ENCODE measurements at regions of chr1 and their contacts with region 1.

Region 1: DNA sequence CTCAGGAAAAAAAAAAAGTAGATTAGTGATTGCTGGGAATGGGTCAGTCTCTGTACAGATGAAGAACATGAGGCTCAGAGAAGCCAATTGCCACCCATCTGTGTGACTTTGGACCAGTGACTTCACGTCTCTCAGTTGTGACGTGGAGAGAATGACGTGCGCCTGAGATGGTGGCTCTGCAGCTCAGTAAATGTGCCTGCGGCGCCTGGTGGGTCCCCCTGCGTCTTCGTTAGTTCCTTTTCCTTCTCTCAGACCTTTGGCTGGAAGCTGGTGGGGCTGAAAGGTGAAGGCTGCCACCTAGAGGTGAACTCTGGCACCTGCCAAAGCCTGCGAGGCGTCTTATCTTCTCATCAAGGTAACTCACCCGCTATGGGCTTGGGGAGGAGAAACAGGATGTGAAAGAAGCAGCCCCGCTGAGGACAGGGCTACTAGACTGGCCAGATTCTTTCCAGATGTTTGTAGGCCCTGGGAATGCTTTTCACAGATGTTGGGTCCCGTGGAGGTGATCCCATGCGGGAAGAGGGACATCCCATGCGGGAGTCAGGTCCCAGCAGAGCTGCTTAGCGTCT is 8.7 kb upstream of the E2F2 start:
- DNase-seq: peak; percentile 81 to 96
- ATAC-seq: peak; percentile 93 to 96 (median 94)
- H3K4me3 ChIP-seq: no peak overlapping the region
- H3K4me3 Mint-ChIP-seq: peak overlapping the region; percentile 17
- H3K27ac ChIP-seq: no peak overlapping the region
- H3K27ac Mint-ChIP-seq: peak overlapping the region in 1 of 2 donors; percentile 33
- H3K4me1 ChIP-seq: peaks cover 16% of the 10 kb centered on the region
- H3K4me1 Mint-ChIP-seq: peaks cover 6 to 11% of the 10 kb centered on the region in 2 donors
- H3K27me3 ChIP-seq: no peaks in the 10 kb centered on the region
- H3K27me3 Mint-ChIP-seq: peaks cover 0 to 3% of the 10 kb centered on the region in 2 donors
- CTCF ChIP-seq: peak; percentile 92

Region 2: GRCh38 chr1:22431965-22432364 is 1107.8 kb before region 1 on chr1:
- intact Hi-C with region 1: no loop called
- DNase-seq: no peak
- ATAC-seq: no peak
- H3K4me3 ChIP-seq: no peak overlapping the region
- H3K4me3 Mint-ChIP-seq: no peak overlapping the region
- H3K27ac ChIP-seq: no peak overlapping the region
- H3K27ac Mint-ChIP-seq: no peak overlapping the region
- H3K4me1 ChIP-seq: peaks cover 3% of the 10 kb centered on the region
- H3K4me1 Mint-ChIP-seq: peaks cover 4% of the 10 kb centered on the region in 2 donors
- H3K27me3 ChIP-seq: no peaks in the 10 kb centered on the region
- H3K27me3 Mint-ChIP-seq: peaks cover 7 to 33% of the 10 kb centered on the region in 2 donors
- CTCF ChIP-seq: no peak

Region 3: GRCh38 chr1:22889213-22889827 is 650.5 kb before region 1 on chr1:
- intact Hi-C with region 1: no loop called
- DNase-seq: peak in 1 of 2 donors; percentile 31
- ATAC-seq: peak in 2 of 3 donors; percentile 41 to 66
- H3K4me3 ChIP-seq: no peak overlapping the region
- H3K4me3 Mint-ChIP-seq: no peak overlapping the region
- H3K27ac ChIP-seq: no peak overlapping the region
- H3K27ac Mint-ChIP-seq: peak overlapping the region in 1 of 2 donors; percentile 1
- H3K4me1 ChIP-seq: peaks cover 15% of the 10 kb centered on the region
- H3K4me1 Mint-ChIP-seq: peaks cover 23 to 32% of the 10 kb centered on the region in 2 donors
- H3K27me3 ChIP-seq: no peaks in the 10 kb centered on the region
- H3K27me3 Mint-ChIP-seq: peaks cover 0 to 6% of the 10 kb centered on the region in 2 donors
- CTCF ChIP-seq: peak; percentile 86

Region 4: GRCh38 chr1:23496490-23497181 is 43.1 kb before region 1 on chr1:
- intact Hi-C with region 1: loop called (anchors 1 kb)
- DNase-seq: no peak
- ATAC-seq: peak in 1 of 3 donors; percentile 15
- H3K4me3 ChIP-seq: no peak overlapping the region
- H3K4me3 Mint-ChIP-seq: no peak overlapping the region
- H3K27ac ChIP-seq: no peak overlapping the region
- H3K27ac Mint-ChIP-seq: no peak overlapping the region
- H3K4me1 ChIP-seq: peaks cover 7% of the 10 kb centered on the region
- H3K4me1 Mint-ChIP-seq: no peaks in the 10 kb centered on the region
- H3K27me3 ChIP-seq: no peaks in the 10 kb centered on the region
- H3K27me3 Mint-ChIP-seq: peaks cover 4 to 10% of the 10 kb centered on the region in 2 donors
- CTCF ChIP-seq: no peak

Region 5: DNA sequence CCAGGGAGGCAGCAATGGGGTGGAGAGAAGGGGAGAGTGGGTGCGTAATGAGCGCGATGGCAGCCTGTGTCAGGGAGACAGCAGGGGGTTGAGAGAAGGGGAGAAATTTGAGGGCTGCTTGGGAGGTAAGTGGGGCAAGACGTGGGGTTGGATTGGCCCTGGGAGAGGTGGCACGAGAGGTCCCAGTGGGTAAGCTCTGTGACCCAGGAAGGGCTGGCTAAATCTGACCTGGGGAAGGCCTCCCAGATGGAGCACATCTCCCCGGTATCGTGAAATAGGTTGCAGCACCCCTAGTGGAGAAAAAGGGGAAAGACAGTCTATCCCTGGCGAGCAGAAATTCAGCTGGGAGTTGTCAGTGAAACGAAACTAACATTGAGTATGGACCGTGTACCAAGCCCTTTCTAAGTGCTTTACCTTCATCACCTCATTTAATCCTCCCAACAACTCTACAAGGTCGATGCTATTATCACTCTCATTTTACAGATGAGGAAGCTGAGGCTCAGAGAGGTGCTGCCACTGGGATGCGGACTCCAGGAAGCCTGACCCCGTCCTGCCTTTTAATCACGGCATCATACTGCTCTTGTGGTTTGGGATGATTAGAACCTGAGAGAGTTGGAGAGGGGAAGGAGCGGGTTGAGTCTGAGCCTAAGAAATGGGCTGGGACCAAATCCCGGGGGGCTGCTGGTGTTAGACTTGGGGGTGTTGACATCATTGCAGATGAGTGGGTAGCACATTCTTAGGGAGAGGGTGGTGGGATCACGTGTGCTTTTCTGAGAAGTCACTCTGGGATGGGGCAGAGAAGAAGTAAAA is 95.3 kb after region 1 on chr1:
- intact Hi-C with region 1: loop called (anchors 1 kb)
- DNase-seq: peak; percentile 26 to 84
- ATAC-seq: peak; percentile 80 to 92 (median 88)
- H3K4me3 ChIP-seq: peak overlapping the region; percentile 17
- H3K4me3 Mint-ChIP-seq: peak overlapping the region; percentile 67
- H3K27ac ChIP-seq: no peak overlapping the region
- H3K27ac Mint-ChIP-seq: peak overlapping the region in 1 of 2 donors; percentile 48
- H3K4me1 ChIP-seq: peaks cover 15% of the 10 kb centered on the region
- H3K4me1 Mint-ChIP-seq: peaks cover 7 to 12% of the 10 kb centered on the region in 2 donors
- H3K27me3 ChIP-seq: no peaks in the 10 kb centered on the region
- H3K27me3 Mint-ChIP-seq: peaks cover 10 to 12% of the 10 kb centered on the region in 2 donors
- CTCF ChIP-seq: peak; percentile 83

Region 6: GRCh38 chr1:23916209-23917131 is 376.7 kb after region 1 on chr1:
- intact Hi-C with region 1: loop called (anchors 2 kb)
- DNase-seq: peak; percentile 57 to 81
- ATAC-seq: peak; percentile 90 to 94 (median 92)
- H3K4me3 ChIP-seq: no peak overlapping the region
- H3K4me3 Mint-ChIP-seq: no peak overlapping the region
- H3K27ac ChIP-seq: no peak overlapping the region
- H3K27ac Mint-ChIP-seq: peak overlapping the region in 1 of 2 donors; percentile 12
- H3K4me1 ChIP-seq: peaks cover 50% of the 10 kb centered on the region
- H3K4me1 Mint-ChIP-seq: peaks cover 27 to 39% of the 10 kb centered on the region in 2 donors
- H3K27me3 ChIP-seq: no peaks in the 10 kb centered on the region
- H3K27me3 Mint-ChIP-seq: peaks cover 0 to 3% of the 10 kb centered on the region in 2 donors
- CTCF ChIP-seq: peak; percentile 79